Activated B cell treated with CpG ODN at 0.5 μM for 24 hours (primary cell): ENCODE measurements at regions of chr14 and their contacts with region 1.

Region 1: DNA sequence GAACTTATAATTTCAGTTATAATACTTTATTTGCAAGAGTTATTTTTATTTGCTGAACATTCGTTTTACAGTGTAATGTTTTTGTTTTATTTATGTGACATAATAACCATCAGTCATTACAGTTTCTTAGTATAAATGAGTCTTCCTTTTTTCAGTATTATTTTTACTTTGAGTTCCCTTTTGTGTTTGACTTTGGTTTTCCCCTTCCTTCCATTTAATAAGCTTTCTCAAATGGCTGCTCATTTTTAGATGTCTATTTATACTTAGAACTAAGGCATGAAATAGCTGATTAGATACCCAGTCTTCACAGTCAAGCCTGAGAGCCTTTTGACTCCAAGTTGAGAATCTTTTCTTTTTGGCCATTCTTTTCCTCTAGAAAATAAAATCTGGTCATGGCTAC is 404.5 kb downstream of the LRFN5 start:
- DNase-seq: no peak
- ATAC-seq: peak; percentile 58
- H3K4me3 Mint-ChIP-seq: peak overlapping the region; percentile 13
- H3K27ac Mint-ChIP-seq: peak overlapping the region; percentile 79
- H3K4me1 Mint-ChIP-seq: peaks cover 31% of the 10 kb centered on the region
- H3K27me3 Mint-ChIP-seq: no peaks in the 10 kb centered on the region
- CTCF ChIP-seq: no peak

Region 2: GRCh38 chr14:41859336-41859735 is 151.9 kb before region 1 on chr14:
- CTCF ChIA-PET with region 1: no interaction called
- POLR2A ChIA-PET with region 1: no interaction called
- intact Hi-C with region 1: no loop called
- DNase-seq: no peak
- ATAC-seq: no peak
- H3K4me3 Mint-ChIP-seq: no peak overlapping the region
- H3K27ac Mint-ChIP-seq: no peak overlapping the region
- H3K4me1 Mint-ChIP-seq: no peaks in the 10 kb centered on the region
- H3K27me3 Mint-ChIP-seq: no peaks in the 10 kb centered on the region
- CTCF ChIP-seq: no peak

Region 3: DNA sequence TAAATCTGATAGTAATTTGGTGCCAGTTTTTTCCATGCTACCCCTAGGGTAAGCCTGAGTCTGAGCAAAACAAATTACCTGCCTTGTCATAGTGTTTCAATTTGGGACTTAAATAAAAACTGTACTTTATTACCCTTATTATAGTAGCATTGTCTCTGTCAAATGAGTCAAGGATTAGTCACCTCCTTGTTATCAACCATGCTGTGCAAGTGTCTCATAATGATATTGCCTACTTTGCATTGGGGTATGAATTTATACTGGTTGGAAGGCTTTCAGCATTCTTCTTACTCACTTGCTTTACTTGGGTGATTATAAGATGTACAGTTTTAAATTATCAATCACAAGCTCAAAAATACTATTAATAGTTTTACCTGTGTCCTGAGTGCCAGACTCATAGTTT is 24.5 kb before region 1 on chr14:
- CTCF ChIA-PET with region 1: no interaction called
- POLR2A ChIA-PET with region 1: interaction called, 5 read pairs
- intact Hi-C with region 1: loop called (anchors 1 kb)
- DNase-seq: no peak
- ATAC-seq: peak; percentile 60
- H3K4me3 Mint-ChIP-seq: no peak overlapping the region
- H3K27ac Mint-ChIP-seq: peak overlapping the region; percentile 52
- H3K4me1 Mint-ChIP-seq: peaks cover 32% of the 10 kb centered on the region
- H3K27me3 Mint-ChIP-seq: no peaks in the 10 kb centered on the region
- CTCF ChIP-seq: no peak

Region 4: GRCh38 chr14:42023447-42023846 is 12.2 kb after region 1 on chr14:
- CTCF ChIA-PET with region 1: no interaction called
- POLR2A ChIA-PET with region 1: interaction called, 3 read pairs
- intact Hi-C with region 1: loop called (anchors 1 kb)
- DNase-seq: no peak
- ATAC-seq: no peak
- H3K4me3 Mint-ChIP-seq: no peak overlapping the region
- H3K27ac Mint-ChIP-seq: no peak overlapping the region
- H3K4me1 Mint-ChIP-seq: peaks cover 39% of the 10 kb centered on the region
- H3K27me3 Mint-ChIP-seq: no peaks in the 10 kb centered on the region
- CTCF ChIP-seq: no peak

Region 5: DNA sequence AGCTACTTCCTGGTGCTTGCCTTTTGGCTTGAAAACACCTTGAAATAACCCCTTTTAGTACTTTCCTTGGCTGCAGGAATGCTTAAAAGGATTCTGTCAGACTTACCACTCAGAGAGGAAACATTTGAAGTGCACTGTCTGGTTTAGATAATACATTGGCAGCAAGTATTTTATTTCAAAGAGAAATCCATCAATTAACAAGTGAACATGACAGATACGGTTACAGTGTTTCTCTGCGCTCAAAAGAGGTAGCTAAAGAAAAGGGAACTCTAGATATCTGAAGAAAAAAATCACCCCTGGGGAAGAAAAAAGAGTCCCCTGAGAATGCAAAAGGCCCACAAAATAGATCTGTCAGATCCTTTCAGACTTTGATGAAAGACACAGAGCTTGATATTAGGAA is 17.4 kb after region 1 on chr14:
- CTCF ChIA-PET with region 1: no interaction called
- POLR2A ChIA-PET with region 1: interaction called, 3 read pairs
- intact Hi-C with region 1: loop called (anchors 2 kb)
- DNase-seq: no peak
- ATAC-seq: peak; percentile 83
- H3K4me3 Mint-ChIP-seq: peak overlapping the region; percentile 38
- H3K27ac Mint-ChIP-seq: peak overlapping the region; percentile 85
- H3K4me1 Mint-ChIP-seq: peaks cover 29% of the 10 kb centered on the region
- H3K27me3 Mint-ChIP-seq: no peaks in the 10 kb centered on the region
- CTCF ChIP-seq: no peak

Region 6: DNA sequence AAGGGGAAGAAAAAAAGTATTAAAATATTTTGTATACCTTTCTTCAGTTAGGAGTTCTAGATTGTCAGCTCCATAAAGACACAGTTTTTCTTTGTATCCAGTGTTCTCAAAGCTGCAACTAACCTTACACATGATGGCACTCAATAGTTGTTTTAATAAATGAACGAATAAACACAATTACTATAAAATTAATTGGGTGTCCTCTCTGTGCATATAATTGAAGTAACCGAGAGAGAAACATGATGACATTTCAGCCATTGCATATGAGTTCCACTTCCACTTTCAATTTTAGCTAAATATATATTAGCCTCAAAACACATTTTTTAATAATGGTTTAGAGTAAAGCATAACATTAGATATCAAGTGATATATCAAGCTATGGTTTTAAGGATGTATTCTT is 266.6 kb after region 1 on chr14:
- CTCF ChIA-PET with region 1: no interaction called
- POLR2A ChIA-PET with region 1: no interaction called
- intact Hi-C with region 1: no loop called
- DNase-seq: no peak
- ATAC-seq: peak; percentile 52
- H3K4me3 Mint-ChIP-seq: no peak overlapping the region
- H3K27ac Mint-ChIP-seq: no peak overlapping the region
- H3K4me1 Mint-ChIP-seq: peaks cover 18% of the 10 kb centered on the region
- H3K27me3 Mint-ChIP-seq: no peaks in the 10 kb centered on the region
- CTCF ChIP-seq: no peak